HCT116 (cell line): ENCODE measurements at regions of chr9 and their contacts with region 1.

Region 1: GRCh38 chr9:37776328-37776727 is 8.5 kb downstream of the EXOSC3 start:
- DNase-seq: no peak
- ATAC-seq: no peak
- H3K4me3 ChIP-seq: no peak overlapping the region
- H3K27ac ChIP-seq: no peak overlapping the region
- H3K4me1 ChIP-seq: no peaks in the 10 kb centered on the region
- H3K27me3 ChIP-seq: no peaks in the 10 kb centered on the region
- CTCF ChIP-seq: no peak
- POLR2A ChIP-seq: no peak
- RAD21 ChIP-seq: no peak

Region 2: DNA sequence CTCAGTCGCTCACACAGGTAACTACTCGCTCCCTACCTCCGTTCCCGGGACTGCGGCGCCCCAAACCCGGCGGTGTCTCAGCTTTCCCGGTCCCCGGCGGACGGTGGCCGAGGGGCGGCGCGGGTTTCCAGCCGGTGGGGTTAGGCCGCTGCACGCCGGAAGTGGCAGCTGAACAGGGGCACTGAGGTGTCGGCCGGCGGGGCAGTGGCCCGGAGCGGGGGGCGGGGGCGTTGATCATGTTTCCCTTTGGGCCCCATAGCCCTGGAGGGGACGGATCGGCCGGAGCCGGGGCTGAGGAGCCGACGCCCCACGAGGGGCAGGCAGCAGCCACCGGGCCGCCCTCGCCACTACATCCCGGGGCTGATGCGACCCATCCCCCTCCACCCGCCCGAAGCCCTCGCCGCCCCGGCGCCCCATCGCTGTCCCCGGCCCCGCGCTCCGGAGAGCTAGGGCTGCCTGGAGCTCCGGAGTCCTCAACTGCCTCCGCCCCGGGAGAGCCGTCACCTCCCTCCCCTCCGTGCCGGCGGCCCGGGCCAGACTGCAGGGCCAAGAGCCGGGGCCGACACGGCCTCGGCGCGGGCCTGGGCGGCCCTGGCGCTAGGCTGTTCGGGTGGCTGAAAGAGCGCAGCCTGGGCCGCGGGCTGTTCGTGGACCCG is 24.4 kb after region 1 on chr9 and contains the start of gene DCAF10:
- CTCF ChIA-PET with region 1: no interaction called
- POLR2A ChIA-PET with region 1: no interaction called
- RAD21 ChIA-PET with region 1: no interaction called
- intact Hi-C with region 1: loop called (anchors 2 kb)
- DNase-seq: peak; percentile 68
- ATAC-seq: peak; percentile 84
- H3K4me3 ChIP-seq: peak within 1 kb of the TSS; percentile 77 to 87
- H3K27ac ChIP-seq: peak within 1 kb of the TSS; percentile 91
- H3K4me1 ChIP-seq: peaks cover 10 to 20% of the 10 kb centered on the region in 2 experiments; a peak in 3 of 4 replicates
- H3K27me3 ChIP-seq: no peaks in the 10 kb centered on the region
- CTCF ChIP-seq: no peak
- POLR2A ChIP-seq: peak; percentile 77
- RAD21 ChIP-seq: no peak
- total RNA-seq, gene DCAF10: 20.6 TPM

Region 3: DNA sequence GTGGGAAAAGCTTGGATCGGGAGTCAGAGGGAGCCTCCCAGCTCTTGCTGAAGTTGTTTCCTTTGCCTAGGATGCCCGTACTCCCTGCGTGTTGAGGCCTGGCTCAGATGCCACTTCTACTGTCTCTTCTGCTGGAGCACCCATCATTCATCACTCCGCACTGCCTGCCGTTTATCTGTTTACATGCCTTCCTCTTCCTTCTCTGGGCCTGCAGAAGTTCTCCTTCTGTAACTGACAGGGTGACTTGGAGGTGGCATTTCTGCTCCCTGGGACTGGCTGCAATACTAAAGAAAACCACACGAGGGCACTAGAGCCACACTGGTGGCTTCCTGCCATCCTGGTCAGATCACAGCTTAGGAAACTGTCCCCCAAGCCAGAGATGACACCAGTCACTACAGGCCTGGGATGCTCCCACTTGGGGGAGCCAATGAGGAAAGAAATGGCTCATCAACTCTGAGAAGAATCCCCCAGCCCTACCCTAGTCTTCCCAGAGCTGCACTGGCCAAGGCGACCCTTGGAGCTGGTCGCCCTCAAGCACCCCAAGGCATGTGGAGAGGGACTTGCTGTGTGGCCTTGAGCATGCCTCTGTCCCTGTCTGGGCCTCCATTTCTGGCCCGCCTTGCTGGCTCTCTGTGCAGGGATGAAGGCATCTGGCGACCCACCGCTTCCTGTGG is 137.3 kb after region 1 on chr9:
- CTCF ChIA-PET with region 1: no interaction called
- POLR2A ChIA-PET with region 1: no interaction called
- RAD21 ChIA-PET with region 1: no interaction called
- intact Hi-C with region 1: no loop called
- DNase-seq: peak; percentile 71
- ATAC-seq: peak; percentile 94
- H3K4me3 ChIP-seq: no peak overlapping the region
- H3K27ac ChIP-seq: no peak overlapping the region; the same call in 1 of the 2 replicates
- H3K4me1 ChIP-seq: peaks cover 0 to 5% of the 10 kb centered on the region in 2 experiments; a peak in 1 of 4 replicates
- H3K27me3 ChIP-seq: no peaks in the 10 kb centered on the region
- CTCF ChIP-seq: peak; percentile 96 to 99 (median 98)
- POLR2A ChIP-seq: no peak
- RAD21 ChIP-seq: peak; percentile 100